OCI-LY7 (cell line): ENCODE measurements at regions of chr2 and their contacts with region 1.

Region 1: GRCh38 chr2:152099367-152100050 is 665 bp upstream of the CACNB4 start:
- DNase-seq: no peak
- H3K4me3 ChIP-seq: no peak overlapping the region
- H3K27ac ChIP-seq: no peak overlapping the region
- H3K4me1 ChIP-seq: no peaks in the 10 kb centered on the region
- CTCF ChIP-seq: no peak

Region 2: DNA sequence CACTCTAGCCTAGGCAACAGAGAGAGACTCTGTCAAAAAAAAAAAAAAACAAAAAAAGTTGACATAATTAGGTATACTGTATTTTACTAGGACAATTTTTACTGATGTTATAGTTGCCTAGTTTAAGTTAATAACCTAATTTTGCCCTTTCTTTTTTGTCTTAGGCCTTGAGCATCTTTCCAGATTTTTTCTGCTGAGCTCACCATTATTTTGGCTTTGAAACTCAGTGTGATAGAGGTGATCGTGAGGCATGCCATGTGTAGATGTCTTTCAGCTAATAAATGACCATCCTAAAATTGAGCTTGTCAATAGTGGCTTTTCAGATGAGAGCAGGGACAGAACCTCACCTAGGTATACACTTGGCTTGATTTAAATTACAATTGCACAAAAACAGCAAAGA is 1331.6 kb after region 1 on chr2:
- CTCF ChIA-PET with region 1: interaction called, 12 read pairs
- POLR2A ChIA-PET with region 1: no interaction called
- intact Hi-C with region 1: no loop called
- DNase-seq: no peak
- H3K4me3 ChIP-seq: no peak overlapping the region
- H3K27ac ChIP-seq: no peak overlapping the region
- H3K4me1 ChIP-seq: no peaks in the 10 kb centered on the region
- CTCF ChIP-seq: no peak